ENCODE measurements at regions of chr5 and their contacts with region 1.

Region 1: DNA sequence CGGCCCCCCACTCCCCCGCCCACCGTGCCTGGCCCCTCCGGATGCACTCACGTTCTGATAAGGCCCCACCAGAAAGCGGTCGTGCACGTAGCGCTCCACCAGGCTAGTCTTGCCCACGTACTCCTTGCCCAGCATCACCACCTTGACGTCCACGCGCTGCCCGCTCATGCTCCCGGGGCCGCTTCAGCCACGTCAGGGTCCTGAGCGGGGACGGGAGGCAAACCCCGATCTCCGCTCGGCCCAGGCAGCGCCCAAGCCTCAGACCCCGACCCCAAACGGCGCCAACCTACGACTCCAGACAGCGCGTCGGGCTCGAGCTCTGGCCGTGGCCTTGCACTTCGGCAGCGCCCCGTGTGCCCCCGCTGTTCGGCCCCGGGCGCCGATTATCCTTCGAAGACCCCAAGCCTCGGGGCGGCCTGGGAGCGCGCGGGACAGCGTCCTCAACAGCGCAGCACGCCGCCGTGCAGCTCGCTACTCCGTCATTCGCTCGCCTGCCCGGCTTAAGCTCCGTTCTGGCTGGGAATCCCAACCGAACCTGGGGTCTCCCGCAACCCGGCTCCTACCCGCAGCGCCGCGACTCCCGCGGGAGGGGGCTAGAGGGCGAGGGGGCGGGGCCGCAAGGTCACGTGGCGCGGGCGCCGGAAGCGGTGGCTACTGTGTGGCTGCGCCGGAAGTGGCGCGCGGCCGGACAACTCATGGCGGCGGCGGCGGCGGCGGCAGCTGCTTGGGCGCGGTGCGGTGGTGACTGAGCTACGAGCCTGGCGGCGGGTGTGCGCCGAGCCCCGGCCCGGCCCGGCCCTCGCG is at the starts of genes PRELID1 and RAB24:
- DNase-seq: peak; percentile 75 to 84
- ATAC-seq: peak; percentile 80 to 84
- H3K4me3 ChIP-seq: peak within 1 kb of the TSS; percentile 84 to 99 (median 96)
- H3K27ac ChIP-seq: peak within 1 kb of the TSS; percentile 83 to 95 (median 92)
- H3K4me1 ChIP-seq: peaks cover 37 to 42% of the 10 kb centered on the region in 2 donors
- H3K27me3 ChIP-seq: no peaks in the 10 kb centered on the region
- CTCF ChIP-seq: peak in 2 of 5 experiments; percentile 11 to 35
- POLR2A ChIP-seq: peak; percentile 81 to 89
- total RNA-seq, gene PRELID1: 13.4 to 45.8 (median 28.2) TPM
- total RNA-seq, gene RAB24: 11.4 to 22.8 (median 14.5) TPM

Region 2: DNA sequence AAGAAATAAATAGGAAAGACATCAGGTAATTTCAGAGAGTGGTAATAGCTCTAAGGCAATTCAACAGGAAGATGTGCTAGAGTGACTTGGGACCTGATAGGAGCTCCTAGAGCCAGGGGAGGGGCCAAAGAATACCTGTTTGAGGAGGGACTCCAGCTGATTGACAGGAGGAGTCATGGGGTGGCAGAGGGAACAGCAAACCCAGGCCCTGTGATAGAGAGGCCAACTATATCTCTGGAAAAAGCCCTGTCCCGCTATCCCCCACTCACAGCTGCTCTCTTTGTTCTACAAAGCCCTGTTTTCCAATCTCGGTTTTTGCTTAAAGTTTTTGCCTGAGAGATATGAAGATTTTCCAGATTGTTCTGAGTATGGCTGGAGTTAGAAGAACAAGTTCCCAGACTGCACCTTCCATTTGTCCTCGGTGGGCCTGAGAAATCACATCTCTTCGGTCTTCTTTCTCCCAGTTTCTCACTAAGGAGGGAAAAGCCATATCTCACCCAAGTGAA is 178.8 kb before region 1 on chr5:
- in situ Hi-C with region 1: loop called in 1 of 4 experiments (anchors 10 kb)
- intact Hi-C with region 1: no loop called
- DNase-seq: no peak
- ATAC-seq: no peak
- H3K4me3 ChIP-seq: no peak overlapping the region
- H3K27ac ChIP-seq: no peak overlapping the region
- H3K4me1 ChIP-seq: no peaks in the 10 kb centered on the region
- H3K27me3 ChIP-seq: no peaks in the 10 kb centered on the region
- CTCF ChIP-seq: no peak
- POLR2A ChIP-seq: no peak

Region 3: GRCh38 chr5:177133091-177133852 is 170.1 kb before region 1 on chr5 and contains the start of gene NSD1:
- in situ Hi-C with region 1: loop called in 1 of 4 experiments (anchors 10 kb)
- intact Hi-C with region 1: loop called (anchors 5 kb)
- DNase-seq: peak; percentile 76 to 84
- ATAC-seq: peak; percentile 71 to 80
- H3K4me3 ChIP-seq: peak within 1 kb of the TSS; percentile 76 to 93 (median 86)
- H3K27ac ChIP-seq: peak within 1 kb of the TSS; percentile 89 to 92 (median 90)
- H3K4me1 ChIP-seq: peaks cover 35 to 38% of the 10 kb centered on the region in 2 donors
- H3K27me3 ChIP-seq: no peaks in the 10 kb centered on the region
- CTCF ChIP-seq: no peak
- POLR2A ChIP-seq: peak; percentile 70 to 74
- total RNA-seq, gene NSD1: 25.4 to 32.7 (median 29.0) TPM

Region 4: DNA sequence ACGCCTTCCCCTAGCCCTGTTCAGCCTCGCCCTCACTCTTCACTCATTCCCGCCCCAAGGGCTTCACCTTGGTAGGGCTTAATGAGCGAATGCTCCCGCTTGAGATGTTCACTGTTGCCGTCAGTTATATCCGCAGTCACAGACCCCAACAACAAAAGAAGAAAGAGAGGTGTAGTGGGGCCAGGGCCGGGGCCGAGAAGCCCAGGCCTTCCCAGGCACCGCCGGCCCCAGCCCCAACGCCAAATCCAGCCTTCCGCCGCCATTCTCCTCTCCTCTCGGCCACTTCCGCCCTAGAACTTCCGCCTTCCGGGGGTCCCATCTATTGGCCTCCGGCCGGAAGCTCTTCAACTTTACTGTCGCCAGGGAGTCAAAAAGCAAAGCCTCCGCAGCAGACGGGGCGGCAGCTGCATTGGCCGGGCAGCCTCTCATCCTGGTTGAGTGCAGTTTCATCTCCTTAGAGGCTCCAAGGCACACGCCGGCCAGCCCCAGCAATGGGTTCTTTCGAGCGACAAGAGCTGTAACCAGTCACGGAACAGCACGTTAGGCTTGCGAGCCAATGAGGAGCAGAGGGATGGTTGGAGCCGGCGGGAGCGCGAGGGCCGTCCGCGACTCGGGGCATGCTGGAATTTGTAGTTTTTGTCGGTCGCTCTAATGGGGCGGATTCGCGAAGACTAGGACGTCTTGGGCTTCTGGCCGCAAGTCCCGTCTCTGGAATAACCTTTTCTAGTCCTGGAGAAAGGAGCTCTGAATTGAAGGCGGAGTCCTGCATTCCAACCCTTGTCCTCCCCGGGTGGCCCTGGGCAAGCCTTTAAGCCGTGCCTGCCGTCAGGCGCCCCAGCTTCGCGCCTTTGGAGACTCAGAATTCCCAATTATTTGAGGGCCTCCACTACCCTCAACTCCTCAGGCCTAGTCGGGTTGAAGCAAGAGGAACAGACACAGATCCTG is 48.3 kb after region 1 on chr5 and contains the start of gene LMAN2:
- in situ Hi-C with region 1: no loop called
- intact Hi-C with region 1: loop called (anchors 2 kb)
- DNase-seq: peak; percentile 93
- ATAC-seq: peak; percentile 99
- H3K4me3 ChIP-seq: peak within 1 kb of the TSS; percentile 74 to 90 (median 77)
- H3K27ac ChIP-seq: peak within 1 kb of the TSS; percentile 80 to 96 (median 90)
- H3K4me1 ChIP-seq: peaks cover 27 to 33% of the 10 kb centered on the region in 2 donors
- H3K27me3 ChIP-seq: no peaks in the 10 kb centered on the region
- CTCF ChIP-seq: no peak
- POLR2A ChIP-seq: peak; percentile 38 to 79
- total RNA-seq, gene LMAN2: 70.2 to 109 (median 86.6) TPM

Measured in gastrocnemius medialis (tissue), 4 donors.